Vagina (tissue), 2 donors: ENCODE measurements at regions of chr7 and their contacts with region 1.

Region 1: GRCh38 chr7:93935112-93935511 is 13.6 kb downstream of the GNG11 start:
- DNase-seq: no peak
- H3K4me3 ChIP-seq: no peak overlapping the region
- H3K27ac ChIP-seq: no peak overlapping the region
- H3K4me1 ChIP-seq: no peaks in the 10 kb centered on the region
- H3K27me3 ChIP-seq: no peaks in the 10 kb centered on the region
- CTCF ChIP-seq: no peak
- POLR2A ChIP-seq: no peak

Region 2: GRCh38 chr7:92110857-92111256 is 1824.3 kb before region 1 on chr7:
- intact Hi-C with region 1: loop called (anchors 5 kb)
- DNase-seq: no peak
- H3K4me3 ChIP-seq: no peak overlapping the region
- H3K27ac ChIP-seq: no peak overlapping the region
- H3K4me1 ChIP-seq: no peaks in the 10 kb centered on the region
- H3K27me3 ChIP-seq: no peaks in the 10 kb centered on the region
- CTCF ChIP-seq: no peak
- POLR2A ChIP-seq: no peak

Region 3: GRCh38 chr7:93337052-93337451 is 598.1 kb before region 1 on chr7:
- intact Hi-C with region 1: no loop called
- DNase-seq: no peak
- H3K4me3 ChIP-seq: no peak overlapping the region
- H3K27ac ChIP-seq: no peak overlapping the region
- H3K4me1 ChIP-seq: no peaks in the 10 kb centered on the region
- H3K27me3 ChIP-seq: no peaks in the 10 kb centered on the region
- CTCF ChIP-seq: no peak
- POLR2A ChIP-seq: no peak